Right cardiac atrium (tissue), 5 donors: ENCODE measurements at regions of chr5 and their contacts with region 1.

Region 1: DNA sequence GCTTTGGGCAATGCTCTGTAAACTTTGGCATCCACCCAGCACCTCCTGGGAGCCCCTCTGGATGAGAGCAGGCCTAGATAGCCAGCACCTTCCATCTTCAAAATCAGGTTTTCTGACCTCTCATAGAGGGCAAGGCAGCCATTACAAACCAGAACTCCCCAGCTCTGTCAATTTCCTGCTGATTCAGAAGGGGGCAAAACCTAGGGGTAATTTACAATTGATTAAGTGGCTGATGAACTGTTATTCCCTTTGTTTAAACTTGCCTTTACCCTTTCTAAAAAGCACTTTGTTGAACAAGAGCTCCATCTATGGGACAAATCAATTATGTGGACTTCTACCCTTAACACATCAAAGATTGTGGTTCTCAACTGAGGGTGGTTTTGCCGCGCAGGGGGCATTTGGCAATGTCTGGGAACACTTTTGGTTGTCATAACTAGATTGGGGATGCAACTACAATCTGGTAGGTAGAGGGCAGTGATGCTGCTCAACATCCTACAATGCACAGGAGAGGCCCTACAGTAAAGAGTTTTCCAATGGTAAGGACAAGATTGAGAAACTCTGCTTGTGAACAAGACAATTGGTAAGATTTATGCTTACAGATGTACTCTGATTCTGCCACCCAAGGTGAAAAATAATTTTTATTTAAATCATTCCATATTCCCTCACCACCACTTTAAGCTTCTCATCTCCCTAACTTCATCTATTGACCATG is 184.1 kb downstream of the MARCHF11 start:
- DNase-seq: no peak
- ATAC-seq: peak in 1 of 2 donors; percentile 46
- H3K4me3 ChIP-seq: no peak overlapping the region
- H3K27ac ChIP-seq: no peak overlapping the region
- H3K4me1 ChIP-seq: no peaks in the 10 kb centered on the region
- H3K27me3 ChIP-seq: no peaks in the 10 kb centered on the region

Region 2: GRCh38 chr5:15105796-15106393 is 889.6 kb before region 1 on chr5:
- intact Hi-C with region 1: loop called in 1 of 4 experiments (anchors 5 kb)
- DNase-seq: peak in 1 of 3 donors; percentile 22
- ATAC-seq: peak; percentile 75 to 82
- H3K4me3 ChIP-seq: no peak overlapping the region
- H3K27ac ChIP-seq: no peak overlapping the region
- H3K4me1 ChIP-seq: no peaks in the 10 kb centered on the region
- H3K27me3 ChIP-seq: no peaks in the 10 kb centered on the region

Region 3: GRCh38 chr5:15472116-15472515 is 523.4 kb before region 1 on chr5:
- intact Hi-C with region 1: loop called in 1 of 4 experiments (anchors 10 kb)
- DNase-seq: no peak
- ATAC-seq: no peak
- H3K4me3 ChIP-seq: no peak overlapping the region
- H3K27ac ChIP-seq: no peak overlapping the region
- H3K4me1 ChIP-seq: no peaks in the 10 kb centered on the region
- H3K27me3 ChIP-seq: no peaks in the 10 kb centered on the region

Region 4: GRCh38 chr5:15821506-15821905 is 174.0 kb before region 1 on chr5:
- intact Hi-C with region 1: loop called in 1 of 4 experiments (anchors 10 kb)
- DNase-seq: no peak
- ATAC-seq: no peak
- H3K4me3 ChIP-seq: no peak overlapping the region
- H3K27ac ChIP-seq: no peak overlapping the region
- H3K4me1 ChIP-seq: no peaks in the 10 kb centered on the region
- H3K27me3 ChIP-seq: no peaks in the 10 kb centered on the region